ENCODE measurements at regions of chr1 and their contacts with region 1.

Region 1: GRCh38 chr1:183580281-183580682 is 10.0 kb downstream of the NCF2 start:
- DNase-seq: peak; percentile 56
- ATAC-seq: peak; percentile 75
- H3K4me3 Mint-ChIP-seq: peak overlapping the region; percentile 57
- H3K27ac Mint-ChIP-seq: peak overlapping the region; percentile 85
- H3K4me1 Mint-ChIP-seq: peaks cover 46% of the 10 kb centered on the region
- H3K27me3 Mint-ChIP-seq: no peaks in the 10 kb centered on the region

Region 2: DNA sequence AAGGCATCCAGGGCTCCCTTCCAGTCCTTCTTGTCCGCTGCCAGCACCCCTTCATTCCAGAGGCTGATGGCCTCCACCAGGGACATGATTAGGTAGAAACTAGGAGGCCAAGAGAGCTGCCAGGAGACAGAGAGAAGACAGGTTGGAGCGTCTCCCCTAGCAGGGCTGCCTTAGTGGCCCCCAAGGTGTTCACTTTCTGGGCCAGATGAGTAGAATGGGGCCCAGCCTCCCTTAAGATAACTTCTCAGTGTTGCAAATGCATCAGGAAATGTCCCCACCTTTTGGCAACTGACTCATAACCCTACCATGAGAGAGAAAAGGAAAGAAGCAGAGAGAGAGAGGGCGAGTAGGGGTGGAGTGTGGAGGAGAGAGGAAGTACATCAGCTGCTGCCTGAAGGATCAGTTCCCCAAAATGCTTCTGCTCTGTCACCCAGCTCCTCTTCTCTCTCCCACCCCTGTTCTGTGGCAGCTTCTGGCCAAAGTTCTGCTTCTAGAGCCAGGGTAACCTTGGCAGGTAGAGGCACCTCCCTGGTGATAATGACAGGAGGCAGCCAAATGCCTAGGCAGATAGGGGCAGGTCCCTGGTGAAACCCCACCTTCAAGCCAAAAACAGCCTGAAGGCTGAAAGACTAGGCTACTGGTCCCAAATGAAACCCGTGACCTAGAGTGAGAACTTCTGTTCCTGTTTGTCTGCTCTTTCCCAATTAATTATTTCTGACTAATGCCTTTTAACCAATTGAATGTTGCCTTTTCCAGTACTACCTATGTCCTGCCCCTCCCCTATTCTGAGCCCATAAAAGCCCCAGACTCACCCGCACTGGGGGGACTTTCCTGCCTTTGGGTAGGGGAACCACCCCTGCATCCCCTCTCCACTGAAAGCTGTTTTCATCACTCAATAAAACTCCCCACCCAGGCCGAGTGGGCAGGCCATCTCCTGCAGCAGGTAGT is 10.2 kb after region 1 on chr1 and contains the start of gene NCF2:
- CTCF ChIA-PET with region 1: interaction called, 22 read pairs
- POLR2A ChIA-PET with region 1: interaction called, 7 read pairs
- DNase-seq: peak; percentile 73
- ATAC-seq: peak; percentile 91
- H3K4me3 Mint-ChIP-seq: peak within 1 kb of the TSS; percentile 54
- H3K27ac Mint-ChIP-seq: peak within 1 kb of the TSS; percentile 84
- H3K4me1 Mint-ChIP-seq: peaks cover 39% of the 10 kb centered on the region
- H3K27me3 Mint-ChIP-seq: peaks cover 2% of the 10 kb centered on the region
- total RNA-seq, gene NCF2: 9.2 to 10.3 TPM

Region 3: DNA sequence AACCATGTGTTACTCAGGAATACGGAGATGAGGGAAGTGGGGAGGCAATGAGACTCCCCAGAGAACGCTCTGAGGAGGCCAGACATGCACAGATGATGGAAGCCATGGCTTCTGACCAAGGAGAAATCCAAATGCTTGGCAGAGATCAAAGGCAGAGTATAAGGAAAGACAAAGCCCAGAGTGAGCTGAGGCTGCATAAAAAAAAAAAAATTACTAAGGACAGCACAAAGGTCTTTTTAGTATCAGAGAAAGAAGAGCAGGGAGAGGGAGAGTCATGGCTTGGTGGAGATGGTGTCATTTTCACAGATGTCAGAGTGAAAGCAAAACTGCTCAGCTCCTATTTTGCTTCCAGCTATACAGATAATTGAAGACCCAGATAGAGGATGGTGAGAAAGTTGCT is 18.1 kb after region 1 on chr1:
- CTCF ChIA-PET with region 1: interaction called, 10 read pairs
- POLR2A ChIA-PET with region 1: interaction called, 3 read pairs
- DNase-seq: no peak
- ATAC-seq: peak; percentile 67
- H3K4me3 Mint-ChIP-seq: no peak overlapping the region
- H3K27ac Mint-ChIP-seq: peak overlapping the region; percentile 10
- H3K4me1 Mint-ChIP-seq: peaks cover 20% of the 10 kb centered on the region
- H3K27me3 Mint-ChIP-seq: peaks cover 5% of the 10 kb centered on the region

Region 4: GRCh38 chr1:183635606-183636333 is 55.5 kb after region 1 on chr1 and contains the start of gene ARPC5:
- CTCF ChIA-PET with region 1: interaction called, 22 read pairs
- POLR2A ChIA-PET with region 1: no interaction called
- DNase-seq: peak; percentile 96
- ATAC-seq: peak; percentile 94
- H3K4me3 Mint-ChIP-seq: peak within 1 kb of the TSS; percentile 100
- H3K27ac Mint-ChIP-seq: peak within 1 kb of the TSS; percentile 99
- H3K4me1 Mint-ChIP-seq: peaks cover 31% of the 10 kb centered on the region
- H3K27me3 Mint-ChIP-seq: peaks cover 11% of the 10 kb centered on the region
- total RNA-seq, gene ARPC5: 271 to 274 TPM